ENCODE measurements at regions of chr14 and their contacts with region 1.

Region 1: GRCh38 chr14:72291908-72292688 is 359.9 kb downstream of the RGS6 start:
- DNase-seq: no peak
- ATAC-seq: peak; percentile 77 to 80
- H3K4me3 ChIP-seq: peak overlapping the region; percentile 17
- H3K27ac ChIP-seq: peak overlapping the region; percentile 6
- H3K4me1 ChIP-seq: no peaks in the 10 kb centered on the region
- H3K27me3 ChIP-seq: no peaks in the 10 kb centered on the region

Region 2: GRCh38 chr14:71932220-71932981 is 359.7 kb before region 1 on chr14 and contains the start of gene RGS6:
- intact Hi-C with region 1: loop called (anchors 5 to 10 kb)
- DNase-seq: peak; percentile 24 to 69 (median 68)
- ATAC-seq: peak; percentile 75 to 77
- H3K4me3 ChIP-seq: peak within 1 kb of the TSS; percentile 45
- H3K27ac ChIP-seq: no peak within 1 kb of the TSS
- H3K4me1 ChIP-seq: no peaks in the 10 kb centered on the region
- H3K27me3 ChIP-seq: no peaks in the 10 kb centered on the region
- total RNA-seq, gene RGS6: 24.0 to 51.4 (median 31.3) TPM

Region 3: DNA sequence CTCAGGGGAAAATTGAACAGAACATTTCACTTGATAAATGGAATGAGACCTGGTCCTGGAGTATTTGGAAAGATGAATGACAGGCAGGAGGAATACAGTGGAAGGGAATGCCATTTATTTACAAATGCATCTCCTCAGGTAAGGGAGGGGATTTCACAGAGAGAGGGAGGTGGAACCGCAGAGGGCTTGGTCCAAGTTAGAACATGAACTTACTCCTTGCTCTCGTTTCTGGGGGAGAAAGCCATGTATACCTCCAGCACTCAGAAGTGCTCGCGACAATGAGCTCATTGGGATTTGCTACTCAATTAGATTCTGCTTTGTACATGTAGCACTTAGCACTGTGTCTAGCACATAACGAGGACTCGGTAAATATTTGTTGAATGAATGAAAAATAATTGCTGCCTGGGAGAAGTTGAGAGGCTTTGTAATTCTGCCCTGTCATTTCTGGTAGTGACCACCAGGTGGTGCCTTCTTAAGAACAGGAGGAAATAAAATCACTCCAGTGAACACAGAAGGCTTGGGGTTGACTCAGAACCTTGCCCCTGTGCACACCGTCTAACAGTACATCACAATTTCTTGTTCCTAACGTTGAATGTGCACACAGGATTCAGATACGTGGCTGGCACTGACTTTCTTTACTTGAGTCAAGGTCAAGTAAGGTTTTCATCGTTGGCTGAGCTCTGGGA is 268.2 kb before region 1 on chr14:
- intact Hi-C with region 1: loop called in 1 of 4 experiments (anchors 10 kb)
- DNase-seq: no peak
- ATAC-seq: peak in 1 of 2 donors; percentile 62
- H3K4me3 ChIP-seq: no peak overlapping the region
- H3K27ac ChIP-seq: no peak overlapping the region
- H3K4me1 ChIP-seq: peaks cover 5% of the 10 kb centered on the region
- H3K27me3 ChIP-seq: no peaks in the 10 kb centered on the region

Measured in right cardiac atrium (tissue), 5 donors.